Activated CD4-positive, alpha-beta memory T cell treated with anti-CD3 and anti-CD28 coated beads, Interleukin-2, amount 10 ng/mL, durations not matched to agents 7 days and 5 days (primary cell): ENCODE measurements at regions of chr15 and their contacts with region 1.

Region 1: DNA sequence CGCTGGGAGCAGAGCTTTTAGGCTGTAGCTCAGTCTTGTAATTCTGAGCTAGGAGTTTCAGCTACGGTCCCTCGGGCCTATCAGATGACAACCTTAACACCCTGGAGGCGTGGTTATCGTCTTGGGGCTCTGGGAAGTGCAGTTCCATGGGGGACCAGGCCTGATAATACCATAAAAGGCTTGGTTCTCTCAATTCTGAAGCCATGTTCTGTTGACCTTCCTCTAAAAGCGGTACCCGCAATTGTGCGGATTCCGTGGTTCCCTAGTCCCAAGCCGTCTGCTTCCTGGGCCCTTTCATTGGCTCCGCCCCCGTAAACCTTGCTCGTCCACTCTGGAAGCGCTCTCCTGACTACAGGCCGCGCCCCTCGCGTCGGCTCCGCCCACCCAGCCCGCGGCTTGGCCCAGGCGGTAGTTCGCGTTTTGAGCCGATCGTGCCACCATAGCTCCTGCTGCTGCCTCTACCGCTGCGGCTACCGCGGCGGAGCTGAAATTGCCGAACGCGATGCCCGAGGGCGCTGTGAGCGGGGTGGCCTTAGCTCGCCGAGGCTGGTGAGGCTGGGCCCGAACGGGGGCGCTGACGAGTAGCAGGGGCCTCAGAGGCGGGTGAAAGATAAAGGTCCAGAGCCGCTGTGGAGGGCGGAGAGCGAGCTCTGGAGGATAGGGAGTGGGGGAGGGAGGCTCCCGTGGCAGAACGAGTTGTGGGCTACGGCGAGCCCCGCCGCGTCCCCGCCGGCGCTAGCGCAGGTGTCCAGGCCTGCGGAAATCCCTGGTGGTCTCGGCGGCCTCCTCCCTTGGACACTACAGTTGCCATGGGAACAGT is at the start of gene MAPKBP1:
- DNase-seq: peak; percentile 99
- H3K4me3 Mint-ChIP-seq: peak within 1 kb of the TSS; percentile 94
- H3K27ac Mint-ChIP-seq: peak within 1 kb of the TSS; percentile 95
- H3K4me1 Mint-ChIP-seq: peaks cover 59% of the 10 kb centered on the region
- H3K27me3 Mint-ChIP-seq: no peaks in the 10 kb centered on the region
- total RNA-seq, gene MAPKBP1: 28.9 to 31.6 TPM

Region 2: GRCh38 chr15:41660235-41661077 is 113.8 kb before region 1 on chr15 and contains the start of gene MGA:
- CTCF ChIA-PET with region 1: no interaction called
- POLR2A ChIA-PET with region 1: interaction called, 12 read pairs
- DNase-seq: peak; percentile 93
- H3K4me3 Mint-ChIP-seq: peak within 1 kb of the TSS; percentile 89
- H3K27ac Mint-ChIP-seq: peak within 1 kb of the TSS; percentile 89
- H3K4me1 Mint-ChIP-seq: peaks cover 34% of the 10 kb centered on the region
- H3K27me3 Mint-ChIP-seq: peaks cover 23% of the 10 kb centered on the region
- total RNA-seq, gene MGA: 28.2 to 30.3 TPM

Region 3: GRCh38 chr15:41790756-41791546 is 16.7 kb after region 1 on chr15:
- CTCF ChIA-PET with region 1: interaction called, 40 read pairs
- POLR2A ChIA-PET with region 1: interaction called, 18 read pairs
- DNase-seq: peak; percentile 30
- H3K4me3 Mint-ChIP-seq: peak overlapping the region; percentile 1
- H3K27ac Mint-ChIP-seq: peak overlapping the region; percentile 70
- H3K4me1 Mint-ChIP-seq: peaks cover 53% of the 10 kb centered on the region
- H3K27me3 Mint-ChIP-seq: no peaks in the 10 kb centered on the region

Region 4: GRCh38 chr15:41827880-41828806 is 53.9 kb after region 1 on chr15 and contains the start of gene JMJD7:
- CTCF ChIA-PET with region 1: interaction called, 46 read pairs
- POLR2A ChIA-PET with region 1: interaction called, 11 read pairs
- DNase-seq: peak; percentile 94
- H3K4me3 Mint-ChIP-seq: peak within 1 kb of the TSS; percentile 76
- H3K27ac Mint-ChIP-seq: peak within 1 kb of the TSS; percentile 17
- H3K4me1 Mint-ChIP-seq: peaks cover 48% of the 10 kb centered on the region
- H3K27me3 Mint-ChIP-seq: peaks cover 3% of the 10 kb centered on the region
- total RNA-seq, gene JMJD7: 18.2 to 22.4 TPM

Region 5: GRCh38 chr15:41904541-41905005 is 130.3 kb after region 1 on chr15:
- CTCF ChIA-PET with region 1: interaction called, 213 read pairs
- POLR2A ChIA-PET with region 1: interaction called, 34 read pairs
- DNase-seq: peak; percentile 80
- H3K4me3 Mint-ChIP-seq: no peak overlapping the region
- H3K27ac Mint-ChIP-seq: peak overlapping the region; percentile 52
- H3K4me1 Mint-ChIP-seq: peaks cover 13% of the 10 kb centered on the region
- H3K27me3 Mint-ChIP-seq: no peaks in the 10 kb centered on the region

Region 6: DNA sequence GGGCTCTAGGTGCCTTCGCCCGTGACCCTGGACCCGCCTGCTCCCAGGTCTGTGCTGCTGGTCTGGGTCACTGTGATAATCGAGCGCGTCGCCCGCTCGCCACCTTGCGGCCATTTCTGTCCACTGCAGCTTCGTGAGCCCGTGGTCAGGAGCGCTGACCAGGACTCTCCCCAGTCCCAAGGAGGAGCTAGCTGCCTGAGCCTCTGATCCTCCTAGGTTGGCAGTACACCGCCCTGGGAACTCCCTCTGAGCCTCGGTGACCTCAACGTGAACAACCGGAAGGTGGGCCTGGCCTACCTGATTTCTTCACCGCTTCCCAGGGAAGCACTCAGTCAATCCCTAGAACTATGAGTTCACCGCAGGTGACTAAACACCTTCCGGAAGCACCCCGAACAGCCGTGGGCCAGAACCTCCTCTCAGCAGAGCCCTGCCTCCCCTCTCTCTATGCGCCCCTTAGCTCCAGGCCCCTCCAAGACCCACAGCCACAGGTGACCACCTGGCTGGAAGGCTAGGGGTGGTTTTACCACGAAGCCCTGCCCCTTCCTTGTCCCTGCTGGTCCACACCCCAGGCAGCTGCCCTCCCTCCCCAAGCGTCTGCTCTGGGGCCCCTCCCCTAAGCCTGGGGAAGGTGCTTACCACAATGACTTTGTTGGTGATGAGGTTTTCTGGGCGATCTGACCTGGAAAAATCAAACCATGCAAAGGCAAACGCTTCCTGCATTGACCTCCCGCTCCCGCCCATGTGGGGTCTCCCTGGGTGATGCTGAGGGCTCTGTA is 310.4 kb after region 1 on chr15:
- CTCF ChIA-PET with region 1: interaction called, 23 read pairs
- POLR2A ChIA-PET with region 1: no interaction called
- DNase-seq: peak; percentile 55
- H3K4me3 Mint-ChIP-seq: no peak overlapping the region
- H3K27ac Mint-ChIP-seq: no peak overlapping the region
- H3K4me1 Mint-ChIP-seq: peaks cover 15% of the 10 kb centered on the region
- H3K27me3 Mint-ChIP-seq: peaks cover 21% of the 10 kb centered on the region